ENCODE measurements at regions of chr5 and their contacts with region 1.

Region 1: DNA sequence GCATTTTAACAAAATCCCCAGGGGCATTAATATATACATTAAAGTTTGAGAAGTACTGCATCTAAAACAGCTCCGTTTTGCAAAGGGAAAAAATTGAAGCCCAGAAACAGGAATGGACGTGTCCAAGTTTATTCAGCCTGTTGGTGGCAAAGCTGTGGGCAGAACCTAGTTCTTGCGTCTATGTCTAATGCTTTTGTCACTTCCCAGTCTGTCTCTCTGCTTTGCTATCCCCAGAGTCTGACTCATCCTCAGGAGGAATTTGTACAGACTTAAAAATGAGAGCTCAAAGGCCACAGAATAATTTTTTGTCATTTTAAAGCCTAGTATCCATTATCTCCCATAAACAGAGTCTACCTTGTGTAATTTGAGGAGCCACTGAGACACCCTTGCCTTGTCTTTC is 330.9 kb upstream of the GRIA1 start:
- DNase-seq: no peak
- H3K4me3 ChIP-seq: no peak overlapping the region
- H3K27ac ChIP-seq: no peak overlapping the region
- H3K4me1 ChIP-seq: no peaks in the 10 kb centered on the region
- H3K27me3 ChIP-seq: no peaks in the 10 kb centered on the region
- CTCF ChIP-seq: no peak
- EP300 ChIP-seq: no peak
- POLR2A ChIP-seq: no peak

Region 2: DNA sequence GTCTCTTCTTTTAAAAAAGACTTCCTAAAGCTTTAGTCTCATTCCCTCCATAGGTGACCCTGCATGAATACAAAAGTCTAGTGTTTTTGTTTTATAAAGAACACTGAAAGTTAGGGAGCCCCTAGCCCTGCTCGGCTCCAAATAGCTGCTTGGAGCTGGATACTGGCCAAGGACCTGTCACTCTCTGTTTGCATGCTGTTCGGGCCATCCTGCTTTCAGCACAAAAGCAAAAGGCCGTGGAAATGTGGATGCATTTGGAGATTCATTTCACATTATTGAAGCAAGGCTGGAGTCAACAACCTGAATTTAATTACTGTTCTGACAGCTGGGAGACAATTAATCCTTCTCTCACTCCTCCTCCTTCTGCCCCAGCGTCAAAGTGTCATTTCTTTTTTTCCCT is 602.8 kb before region 1 on chr5:
- intact Hi-C with region 1: loop called (anchors 10 kb)
- DNase-seq: peak in 1 of 2 donors; percentile 44
- H3K4me3 ChIP-seq: no peak overlapping the region
- H3K27ac ChIP-seq: no peak overlapping the region
- H3K4me1 ChIP-seq: no peaks in the 10 kb centered on the region
- H3K27me3 ChIP-seq: no peaks in the 10 kb centered on the region
- CTCF ChIP-seq: no peak
- EP300 ChIP-seq: no peak
- POLR2A ChIP-seq: no peak

Region 3: GRCh38 chr5:153122403-153122802 is 37.2 kb before region 1 on chr5:
- intact Hi-C with region 1: no loop called
- DNase-seq: peak in 1 of 2 donors; percentile 2
- H3K4me3 ChIP-seq: no peak overlapping the region
- H3K27ac ChIP-seq: no peak overlapping the region
- H3K4me1 ChIP-seq: no peaks in the 10 kb centered on the region
- H3K27me3 ChIP-seq: no peaks in the 10 kb centered on the region
- CTCF ChIP-seq: no peak
- EP300 ChIP-seq: no peak
- POLR2A ChIP-seq: no peak

Measured in stomach (tissue), 19 donors.